ENCODE measurements at regions of chr5 and their contacts with region 1.

Region 1: GRCh38 chr5:36875790-36876388 is 680 bp upstream of the NIPBL start:
- DNase-seq: peak; percentile 85
- H3K4me3 ChIP-seq: peak overlapping the region; percentile 80 to 99 (median 92)
- H3K27ac ChIP-seq: peak overlapping the region; percentile 83
- H3K4me1 ChIP-seq: peaks cover 30% of the 10 kb centered on the region
- H3K27me3 ChIP-seq: no peaks in the 10 kb centered on the region
- CTCF ChIP-seq: peak; percentile 43 to 73
- POLR2A ChIP-seq: no peak

Region 2: GRCh38 chr5:36151434-36152323 is 724.2 kb before region 1 on chr5 and contains the starts of genes LMBRD2 and SKP2:
- CTCF ChIA-PET with region 1: no interaction called
- POLR2A ChIA-PET with region 1: no interaction called
- dilution Hi-C with region 1: no loop called
- intact Hi-C with region 1: loop called (anchors 5 kb)
- DNase-seq: peak; percentile 99
- H3K4me3 ChIP-seq: peak within 1 kb of the TSS; percentile 70 to 84 (median 73)
- H3K27ac ChIP-seq: peak within 1 kb of the TSS; percentile 21
- H3K4me1 ChIP-seq: peaks cover 24% of the 10 kb centered on the region
- H3K27me3 ChIP-seq: no peaks in the 10 kb centered on the region
- CTCF ChIP-seq: no peak
- POLR2A ChIP-seq: peak; percentile 80
- total RNA-seq, gene LMBRD2: 5.2 and 6.6 TPM in 2 replicates
- total RNA-seq, gene SKP2: 40.9 and 42.0 TPM in 2 replicates

Region 3: GRCh38 chr5:36241631-36242533 is 634.0 kb before region 1 on chr5 and contains the start of gene NADK2:
- CTCF ChIA-PET with region 1: interaction called, 6 read pairs
- POLR2A ChIA-PET with region 1: no interaction called
- dilution Hi-C with region 1: no loop called
- intact Hi-C with region 1: loop called (anchors 5 kb)
- DNase-seq: peak; percentile 98
- H3K4me3 ChIP-seq: peak within 1 kb of the TSS; percentile 46 to 59 (median 49)
- H3K27ac ChIP-seq: peak within 1 kb of the TSS; percentile 71
- H3K4me1 ChIP-seq: peaks cover 16% of the 10 kb centered on the region
- H3K27me3 ChIP-seq: no peaks in the 10 kb centered on the region
- CTCF ChIP-seq: peak; percentile 58 to 79
- POLR2A ChIP-seq: peak; percentile 83
- total RNA-seq, gene NADK2: 18.2 and 20.3 TPM in 2 replicates

Region 4: GRCh38 chr5:36494756-36495601 is 380.9 kb before region 1 on chr5:
- CTCF ChIA-PET with region 1: no interaction called
- POLR2A ChIA-PET with region 1: no interaction called
- dilution Hi-C with region 1: no loop called
- intact Hi-C with region 1: no loop called
- DNase-seq: no peak
- H3K4me3 ChIP-seq: no peak overlapping the region
- H3K27ac ChIP-seq: no peak overlapping the region
- H3K4me1 ChIP-seq: no peaks in the 10 kb centered on the region
- H3K27me3 ChIP-seq: no peaks in the 10 kb centered on the region
- CTCF ChIP-seq: no peak
- POLR2A ChIP-seq: no peak

Region 5: GRCh38 chr5:36944607-36945225 is 68.8 kb after region 1 on chr5:
- CTCF ChIA-PET with region 1: interaction called, 28 read pairs
- POLR2A ChIA-PET with region 1: no interaction called
- dilution Hi-C with region 1: no loop called
- intact Hi-C with region 1: loop called (anchors 1 kb)
- DNase-seq: peak; percentile 69
- H3K4me3 ChIP-seq: no peak overlapping the region
- H3K27ac ChIP-seq: no peak overlapping the region
- H3K4me1 ChIP-seq: peaks cover 16% of the 10 kb centered on the region
- H3K27me3 ChIP-seq: no peaks in the 10 kb centered on the region
- CTCF ChIP-seq: peak; percentile 23 to 34
- POLR2A ChIP-seq: no peak

Region 6: DNA sequence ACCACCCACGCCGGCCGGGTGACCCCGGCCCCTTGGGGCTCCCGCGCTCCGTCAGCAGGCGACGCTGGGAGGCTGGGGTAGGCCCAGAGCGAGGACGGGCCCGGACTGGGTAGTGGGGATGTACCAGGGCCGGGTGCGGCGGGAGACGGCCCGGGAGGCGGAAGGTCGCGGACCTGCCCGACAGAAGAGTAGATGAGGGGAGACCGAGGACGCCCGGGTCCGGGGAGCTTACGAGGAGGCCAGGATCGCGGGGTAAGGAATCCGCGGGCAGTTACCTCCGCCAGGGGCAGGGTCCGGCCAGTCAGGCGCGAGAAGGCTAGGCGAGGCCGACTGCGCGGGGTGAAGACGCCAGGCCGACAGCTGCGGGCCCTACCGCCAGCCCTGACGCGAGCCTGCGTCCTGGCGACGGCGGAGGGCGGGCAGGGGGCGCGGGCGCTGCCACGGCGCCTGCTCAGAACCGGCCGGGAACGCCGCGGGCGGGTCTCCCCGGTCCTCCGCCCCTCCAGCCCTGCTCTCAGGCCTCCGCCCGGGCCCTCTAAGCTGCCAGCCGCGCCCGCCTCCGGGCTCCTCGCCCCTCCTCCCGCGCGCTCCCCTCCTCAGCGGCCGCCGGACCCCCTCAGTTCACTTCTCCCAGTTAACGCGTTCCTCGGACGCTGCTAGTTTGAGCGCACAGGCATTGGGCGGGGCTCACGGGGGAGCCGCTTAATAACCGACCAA is 373.2 kb after region 1 on chr5 and contains the start of gene CPLANE1:
- CTCF ChIA-PET with region 1: no interaction called
- POLR2A ChIA-PET with region 1: no interaction called
- dilution Hi-C with region 1: no loop called
- intact Hi-C with region 1: loop called (anchors 5 kb)
- DNase-seq: peak; percentile 87
- H3K4me3 ChIP-seq: peak within 1 kb of the TSS; percentile 96 to 97 (median 96)
- H3K27ac ChIP-seq: peak within 1 kb of the TSS; percentile 85
- H3K4me1 ChIP-seq: peaks cover 6% of the 10 kb centered on the region
- H3K27me3 ChIP-seq: no peaks in the 10 kb centered on the region
- CTCF ChIP-seq: no peak
- POLR2A ChIP-seq: peak; percentile 97
- total RNA-seq, gene CPLANE1: 16.9 and 21.5 TPM in 2 replicates

Measured in endothelial cell of umbilical vein (primary cell).